MCF 10A (cell line): ENCODE measurements at regions of chr1 and their contacts with region 1.

Region 1: GRCh38 chr1:203172128-203173010 is 3.3 kb downstream of the MYBPH start:
- DNase-seq: peak; percentile 89
- H3K4me3 Mint-ChIP-seq: no peak overlapping the region
- H3K27ac Mint-ChIP-seq: no peak overlapping the region
- H3K4me1 Mint-ChIP-seq: peaks cover 2% of the 10 kb centered on the region
- H3K27me3 Mint-ChIP-seq: peaks cover 18% of the 10 kb centered on the region
- CTCF ChIP-seq: peak; percentile 100

Region 2: DNA sequence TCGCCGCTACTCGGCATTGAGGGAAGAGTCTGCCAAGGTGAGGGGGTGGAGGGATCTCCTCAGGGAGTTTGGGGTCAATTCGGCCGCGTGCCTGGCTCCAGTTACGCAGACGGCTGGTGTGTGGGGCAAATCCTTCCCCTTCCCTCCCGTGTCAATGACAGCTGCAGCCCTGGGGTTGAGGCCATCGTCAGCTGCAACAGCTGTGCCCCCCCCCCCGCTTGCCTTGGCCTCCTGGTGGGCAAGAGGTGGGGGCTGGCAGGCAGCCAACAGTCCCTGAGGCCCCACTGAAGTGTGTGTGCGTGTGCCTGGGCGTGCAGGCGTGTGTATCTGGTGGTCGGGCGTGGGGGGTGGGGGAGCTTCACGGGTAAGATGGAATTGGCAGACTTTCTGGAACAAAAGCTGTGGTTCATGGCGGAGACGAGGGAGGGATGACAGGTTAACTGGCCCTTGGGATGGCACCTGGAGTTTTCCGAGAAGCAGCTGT is 120.5 kb before region 1 on chr1:
- CTCF ChIA-PET with region 1: interaction called, 334 read pairs
- POLR2A ChIA-PET with region 1: no interaction called
- intact Hi-C with region 1: no loop called
- DNase-seq: no peak
- H3K4me3 Mint-ChIP-seq: no peak overlapping the region
- H3K27ac Mint-ChIP-seq: no peak overlapping the region
- H3K4me1 Mint-ChIP-seq: peaks cover 11% of the 10 kb centered on the region
- H3K27me3 Mint-ChIP-seq: peaks cover 5% of the 10 kb centered on the region
- CTCF ChIP-seq: no peak

Region 3: DNA sequence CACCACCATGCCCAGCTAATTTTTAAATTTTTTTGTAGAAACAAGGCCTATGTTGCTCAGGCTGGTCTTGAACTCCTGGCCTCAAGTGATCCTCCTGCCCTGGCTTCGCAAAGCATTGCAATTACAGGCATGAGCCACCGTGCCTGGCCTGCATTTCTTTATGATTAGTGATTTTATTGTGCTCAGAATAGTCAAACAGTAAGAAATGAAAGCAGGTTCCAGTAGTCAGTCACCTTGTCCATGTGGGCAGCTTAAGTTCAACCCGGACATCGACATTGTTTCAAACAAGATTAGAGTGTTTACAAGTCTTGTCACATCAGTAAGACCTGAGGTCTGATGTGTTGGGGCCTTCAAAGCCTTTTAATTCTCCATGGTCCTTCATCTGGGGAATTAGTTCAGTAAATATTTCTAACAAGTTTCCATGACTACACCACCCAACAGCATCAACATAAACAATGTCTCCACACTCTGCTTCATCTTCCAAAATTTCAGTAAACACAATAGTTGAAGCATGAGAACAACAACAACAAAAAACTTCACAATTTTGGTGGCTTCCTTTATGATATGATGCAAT is 60.0 kb before region 1 on chr1:
- CTCF ChIA-PET with region 1: interaction called, 89 read pairs
- POLR2A ChIA-PET with region 1: no interaction called
- intact Hi-C with region 1: no loop called
- DNase-seq: no peak
- H3K4me3 Mint-ChIP-seq: no peak overlapping the region
- H3K27ac Mint-ChIP-seq: no peak overlapping the region
- H3K4me1 Mint-ChIP-seq: peaks cover 5% of the 10 kb centered on the region
- H3K27me3 Mint-ChIP-seq: peaks cover 34% of the 10 kb centered on the region
- CTCF ChIP-seq: no peak

Region 4: DNA sequence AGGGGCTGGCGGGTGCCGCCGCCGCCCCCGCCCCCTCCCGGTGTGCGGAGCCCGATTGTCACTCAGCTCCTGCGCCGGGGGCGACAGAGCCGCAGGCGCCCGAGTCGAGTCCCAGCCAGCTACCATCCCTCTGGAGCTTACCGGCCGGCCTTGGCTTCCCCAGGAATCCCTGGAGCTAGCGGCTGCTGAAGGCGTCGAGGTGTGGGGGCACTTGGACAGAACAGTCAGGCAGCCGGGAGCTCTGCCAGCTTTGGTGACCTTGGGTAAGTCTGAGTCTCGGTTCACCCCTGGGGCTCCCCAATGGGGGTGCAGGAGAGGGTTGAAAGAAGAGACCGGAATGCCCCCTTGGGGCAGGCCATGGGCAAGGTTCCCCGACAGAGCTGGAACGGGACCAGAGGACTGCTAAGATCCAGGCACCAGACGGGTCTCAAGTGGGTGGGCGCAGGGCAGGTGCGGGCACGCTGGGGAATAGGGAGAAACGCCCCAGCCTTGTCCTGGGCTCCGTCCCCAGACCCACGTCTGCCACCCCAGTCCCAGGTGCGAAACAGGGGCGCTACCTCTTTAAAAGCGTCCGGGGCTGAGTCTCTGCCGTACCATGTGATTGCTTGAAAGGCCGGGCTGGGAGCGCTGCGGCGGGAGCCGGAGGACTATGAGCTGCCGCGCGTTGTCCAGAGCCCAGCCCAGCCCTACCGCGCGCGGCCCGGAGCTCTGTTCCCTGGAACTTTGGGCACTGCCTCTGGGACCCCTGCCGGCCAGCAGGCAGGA is 44.5 kb before region 1 on chr1 and contains the start of gene ADORA1:
- CTCF ChIA-PET with region 1: interaction called, 37 read pairs
- POLR2A ChIA-PET with region 1: interaction called, 4 read pairs
- intact Hi-C with region 1: no loop called
- DNase-seq: peak; percentile 87
- H3K4me3 Mint-ChIP-seq: peak within 1 kb of the TSS; percentile 72
- H3K27ac Mint-ChIP-seq: peak within 1 kb of the TSS; percentile 21
- H3K4me1 Mint-ChIP-seq: peaks cover 18% of the 10 kb centered on the region
- H3K27me3 Mint-ChIP-seq: peaks cover 13% of the 10 kb centered on the region
- CTCF ChIP-seq: no peak
- total RNA-seq, gene ADORA1: 0.26 and 0.34 TPM in 2 replicates

Region 5: DNA sequence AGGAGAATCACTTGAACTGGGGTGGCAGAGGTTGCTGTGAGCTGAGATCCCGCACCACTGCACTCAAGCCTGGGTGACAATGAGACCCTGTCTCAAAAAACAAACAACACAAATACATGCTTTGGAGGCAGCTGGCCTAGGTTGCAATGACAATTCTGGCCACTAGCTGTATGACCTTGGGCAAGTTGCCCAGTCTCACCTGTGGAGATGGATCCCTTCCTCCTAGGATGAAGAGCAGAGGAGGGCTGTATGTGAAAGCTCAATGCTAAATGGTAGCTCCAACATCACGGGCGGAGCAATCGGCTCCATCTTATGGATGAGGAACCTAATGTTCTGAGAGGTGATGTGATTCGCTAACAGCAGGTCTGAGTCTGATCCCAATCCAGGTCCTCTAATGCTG is 24.2 kb before region 1 on chr1:
- CTCF ChIA-PET with region 1: interaction called, 50 read pairs
- POLR2A ChIA-PET with region 1: no interaction called
- intact Hi-C with region 1: no loop called
- DNase-seq: peak; percentile 68
- H3K4me3 Mint-ChIP-seq: no peak overlapping the region
- H3K27ac Mint-ChIP-seq: no peak overlapping the region
- H3K4me1 Mint-ChIP-seq: peaks cover 16% of the 10 kb centered on the region
- H3K27me3 Mint-ChIP-seq: no peaks in the 10 kb centered on the region
- CTCF ChIP-seq: peak; percentile 70

Region 6: GRCh38 chr1:203202431-203203245 is 30.3 kb after region 1 on chr1:
- CTCF ChIA-PET with region 1: interaction called, 62 read pairs
- POLR2A ChIA-PET with region 1: no interaction called
- intact Hi-C with region 1: no loop called
- DNase-seq: peak; percentile 97
- H3K4me3 Mint-ChIP-seq: no peak overlapping the region
- H3K27ac Mint-ChIP-seq: no peak overlapping the region
- H3K4me1 Mint-ChIP-seq: peaks cover 22% of the 10 kb centered on the region
- H3K27me3 Mint-ChIP-seq: peaks cover 7% of the 10 kb centered on the region
- CTCF ChIP-seq: no peak

Region 7: DNA sequence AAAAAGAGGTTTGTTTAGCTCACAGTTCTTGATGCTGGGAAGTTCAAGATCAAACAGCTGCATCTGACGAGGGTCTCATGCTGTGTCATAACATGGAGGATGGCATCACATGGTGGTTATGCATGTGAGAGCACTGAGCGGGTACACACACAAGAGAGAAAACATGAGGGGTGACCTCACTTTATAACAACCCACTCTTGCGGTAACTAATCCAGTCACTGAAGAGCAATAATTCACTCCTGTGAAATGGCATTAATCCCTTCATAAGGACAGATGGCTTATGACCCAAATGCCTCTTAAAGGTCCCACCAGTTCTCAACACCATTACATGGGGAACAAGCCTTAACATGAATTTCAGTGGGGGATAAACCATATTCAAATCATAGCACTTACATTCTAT is 80.3 kb after region 1 on chr1:
- CTCF ChIA-PET with region 1: interaction called, 10 read pairs
- POLR2A ChIA-PET with region 1: no interaction called
- intact Hi-C with region 1: no loop called
- DNase-seq: no peak
- H3K4me3 Mint-ChIP-seq: no peak overlapping the region
- H3K27ac Mint-ChIP-seq: no peak overlapping the region
- H3K4me1 Mint-ChIP-seq: peaks cover 7% of the 10 kb centered on the region
- H3K27me3 Mint-ChIP-seq: peaks cover 79% of the 10 kb centered on the region
- CTCF ChIP-seq: no peak